A673 (cell line): ENCODE measurements at regions of chrX and their contacts with region 1.

Region 1: DNA sequence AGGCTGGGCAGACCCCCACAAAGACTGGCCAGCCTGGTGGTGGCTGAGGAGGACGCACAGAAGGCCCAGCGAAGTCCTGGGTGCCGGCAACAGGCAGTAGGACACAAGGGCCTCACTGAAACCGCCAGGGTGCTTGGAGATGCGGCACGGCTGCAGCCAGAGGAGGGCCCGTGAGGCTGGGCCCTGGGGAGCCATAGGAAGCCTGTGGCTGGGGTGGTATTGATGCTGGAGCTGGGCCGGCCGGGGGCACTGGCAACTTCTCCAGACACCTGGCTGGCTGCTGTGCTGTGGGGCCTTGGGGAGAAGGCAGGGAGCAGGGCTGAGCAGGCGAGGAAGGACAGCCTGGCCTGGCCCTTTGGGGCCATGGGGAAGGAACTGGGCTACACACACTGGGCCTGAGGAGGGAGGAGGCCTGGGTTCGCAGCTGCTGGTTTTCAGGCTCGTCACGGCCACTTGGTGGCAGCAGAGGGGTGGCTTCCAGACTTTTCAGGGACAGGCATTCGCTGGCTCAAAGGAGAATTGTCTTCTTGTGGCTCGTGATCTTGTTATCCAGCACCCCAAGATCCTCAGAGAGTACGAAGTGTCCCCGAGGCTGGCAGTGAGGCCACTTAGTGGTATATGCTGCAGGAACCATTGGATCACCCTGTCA is 37.2 kb downstream of the ATP2B3 start:
- DNase-seq: peak; percentile 71
- H3K4me3 ChIP-seq: no peak overlapping the region
- H3K27ac ChIP-seq: no peak overlapping the region
- H3K4me1 ChIP-seq: no peaks in the 10 kb centered on the region
- H3K27me3 ChIP-seq: no peaks in the 10 kb centered on the region
- CTCF ChIP-seq: peak; percentile 79

Region 2: DNA sequence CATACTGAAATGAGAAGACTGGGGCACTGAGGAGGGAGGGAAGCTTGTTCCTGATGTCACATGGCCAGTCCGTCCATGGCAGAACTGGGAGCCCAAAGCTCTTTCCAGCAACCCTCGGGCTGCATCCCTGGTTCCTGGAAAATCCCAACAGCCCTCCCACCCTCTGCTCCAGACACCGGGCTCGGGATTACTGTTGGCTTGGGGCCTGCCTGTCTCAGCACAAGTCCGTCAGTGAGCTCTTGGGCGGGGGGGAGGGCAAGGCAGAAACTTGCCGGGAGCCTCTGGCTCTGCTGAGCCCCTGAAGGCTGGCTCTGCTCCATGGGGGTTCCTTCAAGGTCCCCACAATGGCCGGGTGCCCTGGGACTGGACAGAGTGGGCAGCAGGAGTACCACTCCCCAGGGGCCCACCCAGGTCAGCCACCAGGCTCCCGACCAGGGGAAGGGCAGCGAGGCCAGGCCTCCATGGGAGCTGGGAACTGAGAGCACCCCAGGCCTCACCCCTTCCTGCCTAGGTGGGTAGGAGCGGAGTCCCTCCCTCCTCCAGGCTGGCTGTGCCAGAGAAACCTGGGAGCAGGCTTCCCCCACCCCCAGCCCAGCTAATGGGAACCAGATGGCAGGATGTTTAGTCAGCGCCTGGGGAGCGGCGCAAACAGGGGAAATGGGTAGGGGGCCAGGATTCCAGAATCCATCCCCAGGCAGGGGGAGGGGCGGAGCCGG is 77.8 kb before region 1 on chrX:
- CTCF ChIA-PET with region 1: no interaction called
- POLR2A ChIA-PET with region 1: no interaction called
- intact Hi-C with region 1: no loop called
- DNase-seq: peak; percentile 71
- H3K4me3 ChIP-seq: no peak overlapping the region
- H3K27ac ChIP-seq: peak overlapping the region; percentile 71
- H3K4me1 ChIP-seq: peaks cover 31% of the 10 kb centered on the region
- H3K27me3 ChIP-seq: no peaks in the 10 kb centered on the region
- CTCF ChIP-seq: no peak

Region 3: DNA sequence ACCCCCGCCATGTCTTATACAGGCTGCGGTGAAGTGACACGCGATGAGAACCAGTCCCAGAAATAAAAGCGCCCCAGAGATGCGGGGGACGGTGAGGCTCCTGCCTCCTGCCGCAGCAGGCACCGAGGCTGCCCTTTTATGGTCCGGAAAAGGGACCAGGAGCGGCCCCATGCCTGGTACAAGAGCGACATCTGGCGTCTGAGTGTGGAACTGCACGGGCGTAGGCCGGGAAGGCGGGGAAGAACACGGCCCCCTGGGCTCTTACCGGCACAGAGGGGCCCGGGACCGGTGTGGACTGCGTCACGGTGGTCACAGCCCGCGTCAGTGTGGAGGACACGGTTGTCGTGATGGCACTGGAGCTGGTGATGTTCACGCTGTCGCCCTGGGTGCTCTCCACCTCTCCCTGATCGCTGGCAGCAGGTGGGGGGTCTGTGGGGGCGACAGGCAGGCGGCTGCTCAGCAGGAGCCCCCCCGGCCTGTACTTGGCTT is 398.7 kb after region 1 on chrX:
- CTCF ChIA-PET with region 1: no interaction called
- POLR2A ChIA-PET with region 1: no interaction called
- intact Hi-C with region 1: loop called (anchors 10 kb)
- DNase-seq: peak; percentile 86
- H3K4me3 ChIP-seq: no peak overlapping the region
- H3K27ac ChIP-seq: peak overlapping the region; percentile 72
- H3K4me1 ChIP-seq: peaks cover 5% of the 10 kb centered on the region
- H3K27me3 ChIP-seq: no peaks in the 10 kb centered on the region
- CTCF ChIP-seq: peak; percentile 97